Naive thymus-derived CD4-positive, alpha-beta T cell (primary cell): ENCODE measurements at regions of chr12 and their contacts with region 1.

Region 1: DNA sequence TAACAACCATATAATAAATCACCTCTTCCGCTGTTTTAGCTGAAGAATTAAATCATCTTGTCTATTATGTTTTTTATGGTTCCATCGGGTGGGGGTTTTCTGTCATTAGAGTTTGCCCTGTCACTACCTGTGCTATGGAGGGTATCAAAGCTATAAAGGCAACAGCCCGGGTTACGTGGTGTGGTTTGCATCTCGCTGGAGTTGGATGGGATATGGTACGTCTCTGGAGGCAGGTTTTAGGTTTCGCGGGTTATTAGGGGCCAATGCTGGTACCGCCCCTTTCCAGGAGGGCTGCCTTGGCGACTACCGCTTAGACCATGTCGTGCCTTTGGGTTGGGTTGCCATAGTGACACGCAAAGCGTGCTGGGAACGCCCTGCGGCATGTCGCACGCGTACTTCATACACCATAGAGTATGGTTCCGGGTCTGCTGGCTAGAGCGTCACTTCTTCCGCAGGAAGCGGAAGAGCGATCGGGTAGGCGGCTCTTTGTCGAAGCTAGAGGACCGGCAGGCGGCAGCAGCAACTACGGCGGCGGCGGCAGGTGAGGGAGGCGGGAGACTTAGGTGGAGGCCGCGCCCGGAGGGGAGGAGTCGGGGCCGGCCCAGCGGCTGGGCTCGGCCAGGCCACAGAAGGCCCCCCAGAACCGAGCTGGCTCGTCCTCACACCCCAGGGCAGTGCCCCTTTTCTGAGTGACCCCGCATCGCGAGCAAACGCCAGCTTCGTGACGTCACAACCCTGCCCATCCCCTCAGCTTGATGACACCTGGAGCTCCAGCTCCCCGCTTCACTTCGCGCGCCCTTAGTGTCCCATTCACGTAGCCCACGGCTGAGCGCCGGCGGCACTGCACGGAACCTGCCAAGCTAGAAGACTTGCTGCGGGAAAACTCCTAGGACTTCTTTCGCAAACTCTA is at the start of gene ZC3H10:
- DNase-seq: peak; percentile 80 to 99 (median 96)
- ATAC-seq: peak; percentile 89
- H3K4me3 ChIP-seq: peak within 1 kb of the TSS; percentile 95
- H3K4me3 Mint-ChIP-seq: peak within 1 kb of the TSS; percentile 87 to 100 (median 96)
- H3K27ac ChIP-seq: peak within 1 kb of the TSS; percentile 93
- H3K27ac Mint-ChIP-seq: peak within 1 kb of the TSS; percentile 95 to 99 (median 98)
- H3K4me1 ChIP-seq: peaks cover 24 to 25% of the 10 kb centered on the region in 2 donors
- H3K4me1 Mint-ChIP-seq: peaks cover 24 to 47% (median 34%) of the 10 kb centered on the region in 7 donors
- H3K27me3 ChIP-seq: no peaks in the 10 kb centered on the region
- H3K27me3 Mint-ChIP-seq: no peaks in the 10 kb centered on the region
- total RNA-seq, gene ZC3H10: 7.8 to 16.3 (median 13.3) TPM

Region 2: GRCh38 chr12:55817346-55818139 is 300.5 kb before region 1 on chr12 and contains the starts of genes ORMDL2 and SARNP:
- CTCF ChIA-PET with region 1: no interaction called
- POLR2A ChIA-PET with region 1: interaction called, 3 read pairs
- intact Hi-C with region 1: loop called (anchors 1 kb)
- DNase-seq: peak; percentile 81 to 99 (median 98)
- ATAC-seq: peak; percentile 96
- H3K4me3 ChIP-seq: peak within 1 kb of the TSS; percentile 94
- H3K4me3 Mint-ChIP-seq: no peak within 1 kb of the TSS
- H3K27ac ChIP-seq: peak within 1 kb of the TSS; percentile 88
- H3K27ac Mint-ChIP-seq: no peak within 1 kb of the TSS
- H3K4me1 ChIP-seq: peaks cover 22 to 41% of the 10 kb centered on the region in 2 donors
- H3K4me1 Mint-ChIP-seq: peaks cover 32 to 45% (median 37%) of the 10 kb centered on the region in 7 donors
- H3K27me3 ChIP-seq: no peaks in the 10 kb centered on the region
- H3K27me3 Mint-ChIP-seq: no peaks in the 10 kb centered on the region
- total RNA-seq, gene ORMDL2: 12.3 to 67.3 (median 40.5) TPM
- total RNA-seq, gene SARNP: 28.0 to 73.0 (median 41.7) TPM

Region 3: GRCh38 chr12:56078990-56079664 is 38.9 kb before region 1 on chr12:
- CTCF ChIA-PET with region 1: interaction called, 3 read pairs
- POLR2A ChIA-PET with region 1: interaction called, 4 read pairs
- intact Hi-C with region 1: loop called in 1 of 2 experiments (anchors 1 kb)
- DNase-seq: peak in 8 of 9 donors; percentile 20 to 66 (median 40)
- ATAC-seq: peak; percentile 74
- H3K4me3 ChIP-seq: peak overlapping the region; percentile 68
- H3K4me3 Mint-ChIP-seq: peak overlapping the region; percentile 80 to 91 (median 86)
- H3K27ac ChIP-seq: no peak overlapping the region
- H3K27ac Mint-ChIP-seq: peak overlapping the region in 4 of 9 donors; percentile 28 to 73 (median 50)
- H3K4me1 ChIP-seq: peaks cover 5 to 10% of the 10 kb centered on the region in 2 donors
- H3K4me1 Mint-ChIP-seq: peaks cover 0 to 16% (median 10%) of the 10 kb centered on the region in 7 donors
- H3K27me3 ChIP-seq: no peaks in the 10 kb centered on the region
- H3K27me3 Mint-ChIP-seq: peaks cover 0 to 51% (median 8%) of the 10 kb centered on the region in 5 donors

Region 4: DNA sequence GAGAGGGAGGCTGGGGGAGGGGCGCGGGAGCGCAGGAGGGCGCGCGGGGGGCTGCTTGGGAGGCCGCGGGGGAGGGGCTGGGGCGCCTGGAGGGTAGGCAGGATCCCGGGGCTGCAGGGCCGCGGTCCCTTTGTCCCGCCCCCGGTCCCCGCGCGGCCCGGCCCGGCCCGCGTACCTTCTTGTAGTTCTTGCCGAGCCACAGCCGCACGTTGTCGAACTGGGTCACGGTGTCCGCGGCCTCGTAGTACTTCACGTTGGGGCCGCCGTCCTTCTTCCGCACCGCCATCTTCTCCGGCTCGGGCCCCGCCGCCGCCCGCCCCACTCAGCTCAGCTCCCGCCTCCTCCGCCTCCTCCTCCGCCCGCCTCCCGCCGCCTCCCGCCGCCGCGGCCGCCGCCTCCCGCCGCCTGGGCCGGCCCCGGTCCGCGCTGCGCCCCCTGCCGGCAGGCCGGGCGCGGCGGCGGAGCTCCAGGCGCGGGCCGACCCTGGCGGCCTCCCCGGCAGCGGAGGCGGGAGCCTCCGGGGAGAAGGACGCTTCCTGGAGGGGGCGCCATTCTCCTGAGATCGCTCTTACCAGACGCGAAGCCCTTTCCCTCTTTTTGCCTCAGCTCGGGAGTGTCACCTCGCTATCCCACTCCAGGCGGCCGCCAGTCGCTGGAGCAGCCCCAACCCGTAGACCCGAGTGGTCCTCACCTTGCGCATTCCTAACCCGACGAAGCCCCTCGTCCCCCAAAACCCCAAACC is 71.3 kb after region 1 on chr12 and contains the start of gene SMARCC2:
- CTCF ChIA-PET with region 1: interaction called, 193 read pairs
- POLR2A ChIA-PET with region 1: interaction called, 192 read pairs
- intact Hi-C with region 1: loop called (anchors 1 kb)
- DNase-seq: peak; percentile 78 to 93 (median 82)
- ATAC-seq: peak; percentile 93
- H3K4me3 ChIP-seq: peak within 1 kb of the TSS; percentile 91
- H3K4me3 Mint-ChIP-seq: peak within 1 kb of the TSS; percentile 76 to 98 (median 95)
- H3K27ac ChIP-seq: peak within 1 kb of the TSS; percentile 92
- H3K27ac Mint-ChIP-seq: peak within 1 kb of the TSS; percentile 93 to 99 (median 98)
- H3K4me1 ChIP-seq: peaks cover 9 to 19% of the 10 kb centered on the region in 2 donors
- H3K4me1 Mint-ChIP-seq: peaks cover 37 to 55% (median 49%) of the 10 kb centered on the region in 7 donors
- H3K27me3 ChIP-seq: no peaks in the 10 kb centered on the region
- H3K27me3 Mint-ChIP-seq: peaks cover 0 to 4% (median 0%) of the 10 kb centered on the region in 5 donors
- total RNA-seq, gene SMARCC2: 118 to 187 (median 149) TPM

Region 5: DNA sequence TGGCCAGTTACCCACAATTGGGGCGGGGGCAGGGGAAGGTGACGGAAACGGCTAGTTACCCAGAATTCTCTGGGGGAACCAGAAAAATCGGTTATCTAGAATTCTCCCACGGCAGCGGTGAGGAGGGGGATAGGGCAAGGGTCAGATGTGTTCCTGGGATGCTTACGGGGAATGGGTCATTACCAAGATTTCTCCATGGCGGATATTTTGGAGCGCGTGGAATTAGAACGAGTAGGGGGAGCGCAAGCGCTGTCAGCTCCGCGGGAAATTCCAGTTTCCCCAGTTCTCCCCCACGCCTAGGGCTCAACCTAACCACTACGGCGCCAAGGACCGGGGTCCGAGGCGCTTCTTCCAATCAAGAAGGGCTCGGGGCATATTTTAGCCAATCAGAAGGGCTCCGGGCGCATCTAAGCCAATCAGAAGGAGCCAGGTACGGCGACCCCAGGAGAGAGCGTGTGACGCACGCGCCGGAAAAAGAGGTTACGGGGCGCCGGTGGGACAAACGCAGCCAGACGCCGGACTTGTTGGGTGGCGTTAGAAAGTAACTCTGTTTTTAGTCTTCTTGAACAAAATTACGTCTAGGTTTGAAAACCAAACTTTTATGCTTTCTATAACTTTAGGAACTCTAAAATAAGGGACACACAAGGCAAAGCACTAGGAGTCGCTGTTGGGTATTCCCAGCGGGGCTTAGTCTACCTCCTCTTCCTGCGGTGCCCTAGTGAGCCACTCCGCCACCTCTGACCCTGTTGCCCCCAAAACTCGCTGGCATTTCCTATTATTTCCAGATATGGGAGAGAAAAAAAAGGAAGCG is 215.9 kb after region 1 on chr12 and contains the start of gene PAN2:
- CTCF ChIA-PET with region 1: no interaction called
- POLR2A ChIA-PET with region 1: interaction called, 3 read pairs
- intact Hi-C with region 1: loop called in 1 of 2 experiments (anchors 2 kb)
- DNase-seq: peak; percentile 74 to 94 (median 92)
- ATAC-seq: peak; percentile 90
- H3K4me3 ChIP-seq: peak within 1 kb of the TSS; percentile 93
- H3K4me3 Mint-ChIP-seq: peak within 1 kb of the TSS; percentile 89 to 99 (median 95)
- H3K27ac ChIP-seq: peak within 1 kb of the TSS; percentile 98
- H3K27ac Mint-ChIP-seq: peak within 1 kb of the TSS; percentile 97 to 100 (median 99)
- H3K4me1 ChIP-seq: peaks cover 27 to 30% of the 10 kb centered on the region in 2 donors
- H3K4me1 Mint-ChIP-seq: peaks cover 16 to 66% (median 48%) of the 10 kb centered on the region in 7 donors
- H3K27me3 ChIP-seq: no peaks in the 10 kb centered on the region
- H3K27me3 Mint-ChIP-seq: peaks cover 0 to 2% (median 0%) of the 10 kb centered on the region in 5 donors
- total RNA-seq, gene PAN2: 65.8 to 279 (median 144) TPM

Region 6: GRCh38 chr12:57005980-57006808 is 888.2 kb after region 1 on chr12 and contains the start of gene ZBTB39:
- CTCF ChIA-PET with region 1: no interaction called
- POLR2A ChIA-PET with region 1: no interaction called
- intact Hi-C with region 1: loop called in 1 of 2 experiments (anchors 5 kb)
- DNase-seq: peak; percentile 51 to 84 (median 62)
- ATAC-seq: peak; percentile 91
- H3K4me3 ChIP-seq: peak within 1 kb of the TSS; percentile 63
- H3K4me3 Mint-ChIP-seq: peak within 1 kb of the TSS; percentile 90 to 94 (median 92)
- H3K27ac ChIP-seq: peak within 1 kb of the TSS; percentile 82
- H3K27ac Mint-ChIP-seq: peak within 1 kb of the TSS; percentile 92 to 95 (median 95)
- H3K4me1 ChIP-seq: peaks cover 20 to 46% of the 10 kb centered on the region in 2 donors
- H3K4me1 Mint-ChIP-seq: peaks cover 36 to 80% (median 76%) of the 10 kb centered on the region in 7 donors
- H3K27me3 ChIP-seq: no peaks in the 10 kb centered on the region
- H3K27me3 Mint-ChIP-seq: no peaks in the 10 kb centered on the region
- total RNA-seq, gene ZBTB39: 5.8 to 12.9 (median 10.7) TPM